GM13977 (cell line): ENCODE measurements at regions of chr12 and their contacts with region 1.

Region 1: GRCh38 chr12:56521590-56522371 is at the start of gene RBMS2:
- DNase-seq: peak; percentile 48
- CTCF ChIP-seq: no peak

Region 2: DNA sequence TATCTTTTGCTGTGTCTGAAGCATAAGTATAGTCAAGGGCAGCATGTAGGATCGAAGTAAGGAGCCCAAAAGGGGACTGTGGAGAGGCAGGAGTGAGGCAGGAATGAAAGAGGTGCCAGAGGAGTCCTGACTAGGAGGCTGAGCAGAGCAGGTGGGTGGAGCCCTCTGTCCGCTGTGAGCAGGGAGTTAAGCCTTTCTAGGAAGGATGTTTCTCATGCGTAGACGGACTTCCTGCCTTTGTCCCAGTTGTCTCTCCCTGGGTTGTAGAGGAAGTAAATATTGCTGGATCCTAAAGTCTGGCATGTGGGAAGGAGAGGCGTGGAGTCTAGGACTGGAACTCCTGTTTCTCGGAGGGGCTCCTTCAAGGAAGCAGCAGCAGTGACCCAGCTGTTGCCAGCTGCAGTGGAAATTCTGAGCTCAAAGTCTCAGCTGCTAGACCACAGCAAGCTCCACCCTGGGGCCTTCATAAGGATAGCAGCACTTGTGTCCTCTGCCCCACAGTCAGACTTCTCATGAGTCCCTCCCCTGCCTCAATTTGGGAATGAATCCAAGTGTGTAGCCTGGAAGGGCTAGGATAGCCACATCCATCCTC is 43.8 kb after region 1 on chr12:
- in situ Hi-C with region 1: loop called (anchors 10 kb)
- DNase-seq: peak; percentile 46
- CTCF ChIP-seq: no peak

Region 3: GRCh38 chr12:56581418-56582145 is 59.8 kb after region 1 on chr12:
- in situ Hi-C with region 1: loop called (anchors 10 kb)
- DNase-seq: peak; percentile 44
- CTCF ChIP-seq: no peak

Region 4: GRCh38 chr12:56922031-56922430 is 400.2 kb after region 1 on chr12:
- in situ Hi-C with region 1: no loop called
- DNase-seq: no peak
- CTCF ChIP-seq: no peak

Region 5: DNA sequence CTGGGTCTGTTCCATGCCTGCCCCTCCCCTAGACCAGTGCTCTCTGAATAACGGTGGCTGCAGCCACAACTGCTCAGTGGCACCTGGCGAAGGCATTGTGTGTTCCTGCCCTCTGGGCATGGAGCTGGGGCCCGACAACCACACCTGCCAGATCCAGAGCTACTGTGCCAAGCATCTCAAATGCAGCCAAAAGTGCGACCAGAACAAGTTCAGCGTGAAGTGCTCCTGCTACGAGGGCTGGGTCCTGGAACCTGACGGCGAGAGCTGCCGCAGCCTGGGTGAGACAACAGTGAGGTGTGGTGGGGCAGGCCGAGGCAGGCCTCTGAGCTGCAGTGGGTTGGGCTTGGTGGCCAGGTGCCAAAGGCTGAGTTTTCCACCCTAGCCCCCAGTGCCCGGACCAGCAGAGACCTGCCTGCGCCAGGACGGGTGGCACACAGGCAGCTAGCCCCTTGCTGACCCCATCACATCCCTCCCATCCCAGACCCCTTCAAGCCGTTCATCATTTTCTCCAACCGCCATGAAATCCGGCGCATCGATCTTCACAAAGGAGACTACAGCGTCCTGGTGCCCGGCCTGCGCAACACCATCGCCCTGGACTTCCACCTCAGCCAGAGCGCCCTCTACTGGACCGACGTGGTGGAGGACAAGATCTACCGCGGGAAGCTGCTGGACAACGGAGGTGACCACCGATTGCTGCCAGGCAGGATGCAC is 653.8 kb after region 1 on chr12:
- in situ Hi-C with region 1: no loop called
- DNase-seq: no peak
- CTCF ChIP-seq: peak; percentile 64